Activated CD4-positive, alpha-beta T cell treated with anti-CD3 and anti-CD28 coated beads for 36 hours (primary cell): ENCODE measurements at regions of chr7 and their contacts with region 1.

Region 1: GRCh38 chr7:30510124-30511075 is 5.8 kb upstream of the GGCT start:
- DNase-seq: peak; percentile 59
- ATAC-seq: peak; percentile 59
- H3K4me3 Mint-ChIP-seq: no peak overlapping the region
- H3K27ac Mint-ChIP-seq: no peak overlapping the region
- H3K4me1 Mint-ChIP-seq: peaks cover 6% of the 10 kb centered on the region
- H3K27me3 Mint-ChIP-seq: no peaks in the 10 kb centered on the region

Region 2: GRCh38 chr7:30521532-30521931 is 11.1 kb after region 1 on chr7:
- CTCF ChIA-PET with region 1: interaction called, 15 read pairs
- POLR2A ChIA-PET with region 1: no interaction called
- intact Hi-C with region 1: no loop called
- DNase-seq: peak; percentile 19
- ATAC-seq: peak; percentile 66
- H3K4me3 Mint-ChIP-seq: no peak overlapping the region
- H3K27ac Mint-ChIP-seq: peak overlapping the region; percentile 43
- H3K4me1 Mint-ChIP-seq: peaks cover 20% of the 10 kb centered on the region
- H3K27me3 Mint-ChIP-seq: no peaks in the 10 kb centered on the region

Region 3: DNA sequence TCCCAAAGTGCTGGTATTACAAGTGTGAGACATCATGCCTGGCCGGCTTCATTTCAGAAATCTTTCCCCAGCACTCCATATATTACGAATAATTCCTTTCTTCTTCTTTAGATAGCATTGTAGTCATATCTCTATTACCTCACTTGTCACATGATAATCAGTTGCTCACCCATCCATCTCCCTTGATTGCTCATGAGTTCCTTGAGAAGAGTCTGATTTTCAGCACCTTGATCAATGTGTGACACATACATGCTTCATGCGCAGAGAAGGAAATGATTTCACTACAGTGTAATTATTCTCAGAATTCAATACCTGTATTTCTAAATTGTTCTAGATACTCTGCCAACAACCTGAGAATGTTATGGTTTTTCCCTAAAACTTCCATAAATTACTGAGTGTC is 20.9 kb after region 1 on chr7:
- CTCF ChIA-PET with region 1: interaction called, 13 read pairs
- POLR2A ChIA-PET with region 1: no interaction called
- intact Hi-C with region 1: no loop called
- DNase-seq: no peak
- ATAC-seq: peak; percentile 92
- H3K4me3 Mint-ChIP-seq: no peak overlapping the region
- H3K27ac Mint-ChIP-seq: no peak overlapping the region
- H3K4me1 Mint-ChIP-seq: peaks cover 10% of the 10 kb centered on the region
- H3K27me3 Mint-ChIP-seq: no peaks in the 10 kb centered on the region

Region 4: GRCh38 chr7:30650421-30650808 is 140.0 kb after region 1 on chr7:
- CTCF ChIA-PET with region 1: no interaction called
- POLR2A ChIA-PET with region 1: no interaction called
- intact Hi-C with region 1: no loop called
- DNase-seq: no peak
- ATAC-seq: no peak
- H3K4me3 Mint-ChIP-seq: no peak overlapping the region
- H3K27ac Mint-ChIP-seq: no peak overlapping the region
- H3K4me1 Mint-ChIP-seq: no peaks in the 10 kb centered on the region
- H3K27me3 Mint-ChIP-seq: no peaks in the 10 kb centered on the region